ENCODE measurements at regions of chr1 and their contacts with region 1.

Region 1: DNA sequence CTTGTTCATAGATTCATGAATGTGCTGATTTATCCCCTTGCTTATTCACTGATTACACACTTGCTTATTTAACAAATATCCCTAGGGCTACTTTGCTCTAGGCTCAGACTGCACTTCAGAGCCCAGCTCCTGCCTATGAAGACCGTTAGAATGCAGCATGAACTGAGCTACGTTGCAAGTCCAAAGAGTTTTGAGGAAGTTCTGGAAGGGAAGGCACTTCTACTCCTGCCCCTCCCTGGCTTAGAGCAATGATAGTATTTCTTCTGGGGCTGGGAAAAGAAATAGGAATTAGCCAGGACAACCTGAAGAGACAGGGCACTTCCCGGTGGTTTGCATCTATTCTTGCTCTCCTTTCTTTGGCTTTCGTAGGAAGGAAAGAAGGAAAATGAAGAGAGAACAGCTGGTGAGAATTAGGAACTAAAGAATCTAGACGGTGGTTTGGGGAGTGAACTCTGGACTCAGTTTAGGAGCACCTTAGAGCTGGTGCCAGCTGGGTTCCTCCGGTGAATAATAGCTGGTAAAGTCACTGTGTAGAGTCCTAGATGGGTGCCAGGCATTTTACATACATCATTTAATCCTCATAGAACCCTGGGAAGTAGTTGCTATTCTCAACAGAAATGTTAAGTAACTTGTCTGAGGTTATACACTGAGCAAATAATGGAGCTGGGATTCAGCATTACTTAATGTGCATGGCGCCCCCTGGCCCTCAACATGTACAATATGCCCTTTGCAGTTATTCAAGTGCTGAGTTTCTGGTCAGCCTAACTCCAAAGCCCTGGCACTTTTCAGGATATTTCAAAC is 65.9 kb downstream of the NDUFS5 start:
- DNase-seq: peak in 7 of 9 experiments; percentile 13 to 74 (median 67)
- ATAC-seq: peak; percentile 75
- H3K4me3 ChIP-seq: no peak overlapping the region
- H3K4me3 Mint-ChIP-seq: no peak overlapping the region
- H3K27ac ChIP-seq: no peak overlapping the region
- H3K27ac Mint-ChIP-seq: no peak overlapping the region
- H3K4me1 ChIP-seq: no peaks in the 10 kb centered on the region
- H3K4me1 Mint-ChIP-seq: peaks cover 8% of the 10 kb centered on the region
- H3K27me3 ChIP-seq: no peaks in the 10 kb centered on the region
- H3K27me3 Mint-ChIP-seq: peaks cover 7% of the 10 kb centered on the region
- CTCF ChIP-seq: peak; percentile 69

Region 2: DNA sequence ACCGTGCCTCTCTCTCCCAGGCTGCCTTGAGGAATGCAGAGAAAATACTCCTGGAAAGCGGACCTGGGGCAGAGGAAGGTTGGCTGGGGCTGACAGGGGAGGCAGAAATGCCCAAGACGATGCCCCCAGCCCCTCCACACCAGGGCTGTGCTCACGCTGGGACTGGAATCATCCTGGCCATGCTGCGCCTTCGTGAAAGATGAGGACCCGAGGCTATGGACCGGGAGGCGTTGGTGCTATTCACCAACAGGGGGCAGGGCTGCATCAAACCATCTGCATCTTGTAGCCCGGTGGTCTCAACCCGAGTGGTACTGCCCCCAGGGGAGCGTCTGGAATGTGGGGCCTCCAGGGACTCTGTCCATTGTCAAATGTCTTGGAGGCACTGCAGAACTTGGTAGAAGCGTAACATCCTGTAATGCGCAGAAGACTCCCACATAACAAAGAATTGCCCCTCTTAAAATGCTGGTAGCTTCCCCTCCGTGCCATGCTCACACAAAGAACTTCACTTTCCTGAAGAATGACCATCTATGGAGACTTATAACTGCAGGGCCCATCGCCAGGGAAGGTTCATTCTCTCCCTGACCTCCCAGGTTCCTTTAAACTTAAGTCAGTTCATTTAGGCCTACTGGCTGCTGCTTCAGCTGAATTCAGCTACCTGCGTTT is 483.7 kb before region 1 on chr1:
- CTCF ChIA-PET with region 1: no interaction called
- POLR2A ChIA-PET with region 1: no interaction called
- intact Hi-C with region 1: loop called in 1 of 2 experiments (anchors 5 kb)
- DNase-seq: peak in 3 of 9 experiments; percentile 13 to 35 (median 19)
- ATAC-seq: no peak
- H3K4me3 ChIP-seq: no peak overlapping the region
- H3K4me3 Mint-ChIP-seq: no peak overlapping the region
- H3K27ac ChIP-seq: no peak overlapping the region
- H3K27ac Mint-ChIP-seq: no peak overlapping the region
- H3K4me1 ChIP-seq: no peaks in the 10 kb centered on the region
- H3K4me1 Mint-ChIP-seq: no peaks in the 10 kb centered on the region
- H3K27me3 ChIP-seq: no peaks in the 10 kb centered on the region
- H3K27me3 Mint-ChIP-seq: peaks cover 21% of the 10 kb centered on the region
- CTCF ChIP-seq: peak; percentile 29

Region 3: DNA sequence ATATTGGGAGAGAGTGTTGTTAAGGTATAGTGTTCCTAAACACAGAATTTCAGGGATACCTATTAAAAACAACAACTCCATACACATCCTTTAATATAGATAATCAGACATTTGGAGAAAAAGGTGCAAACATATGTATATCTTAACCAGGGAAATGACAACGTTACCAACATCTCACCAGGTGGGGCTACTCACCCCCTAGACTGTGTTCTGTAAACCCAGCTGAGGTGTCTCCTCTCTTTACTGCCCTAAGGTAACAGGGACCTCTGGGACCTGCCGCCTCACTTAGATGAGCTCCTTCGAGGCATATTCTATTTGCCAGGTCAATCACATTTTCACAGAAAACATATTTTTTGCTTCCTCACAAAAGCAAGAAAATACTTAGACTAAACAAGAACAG is 245.8 kb before region 1 on chr1:
- CTCF ChIA-PET with region 1: interaction called, 10 read pairs
- POLR2A ChIA-PET with region 1: no interaction called
- intact Hi-C with region 1: no loop called
- DNase-seq: peak in 1 of 9 experiments; percentile 21
- ATAC-seq: no peak
- H3K4me3 ChIP-seq: no peak overlapping the region
- H3K4me3 Mint-ChIP-seq: no peak overlapping the region
- H3K27ac ChIP-seq: no peak overlapping the region
- H3K27ac Mint-ChIP-seq: peak overlapping the region; percentile 11
- H3K4me1 ChIP-seq: no peaks in the 10 kb centered on the region
- H3K4me1 Mint-ChIP-seq: peaks cover 20% of the 10 kb centered on the region
- H3K27me3 ChIP-seq: no peaks in the 10 kb centered on the region
- H3K27me3 Mint-ChIP-seq: no peaks in the 10 kb centered on the region
- CTCF ChIP-seq: no peak

Region 4: DNA sequence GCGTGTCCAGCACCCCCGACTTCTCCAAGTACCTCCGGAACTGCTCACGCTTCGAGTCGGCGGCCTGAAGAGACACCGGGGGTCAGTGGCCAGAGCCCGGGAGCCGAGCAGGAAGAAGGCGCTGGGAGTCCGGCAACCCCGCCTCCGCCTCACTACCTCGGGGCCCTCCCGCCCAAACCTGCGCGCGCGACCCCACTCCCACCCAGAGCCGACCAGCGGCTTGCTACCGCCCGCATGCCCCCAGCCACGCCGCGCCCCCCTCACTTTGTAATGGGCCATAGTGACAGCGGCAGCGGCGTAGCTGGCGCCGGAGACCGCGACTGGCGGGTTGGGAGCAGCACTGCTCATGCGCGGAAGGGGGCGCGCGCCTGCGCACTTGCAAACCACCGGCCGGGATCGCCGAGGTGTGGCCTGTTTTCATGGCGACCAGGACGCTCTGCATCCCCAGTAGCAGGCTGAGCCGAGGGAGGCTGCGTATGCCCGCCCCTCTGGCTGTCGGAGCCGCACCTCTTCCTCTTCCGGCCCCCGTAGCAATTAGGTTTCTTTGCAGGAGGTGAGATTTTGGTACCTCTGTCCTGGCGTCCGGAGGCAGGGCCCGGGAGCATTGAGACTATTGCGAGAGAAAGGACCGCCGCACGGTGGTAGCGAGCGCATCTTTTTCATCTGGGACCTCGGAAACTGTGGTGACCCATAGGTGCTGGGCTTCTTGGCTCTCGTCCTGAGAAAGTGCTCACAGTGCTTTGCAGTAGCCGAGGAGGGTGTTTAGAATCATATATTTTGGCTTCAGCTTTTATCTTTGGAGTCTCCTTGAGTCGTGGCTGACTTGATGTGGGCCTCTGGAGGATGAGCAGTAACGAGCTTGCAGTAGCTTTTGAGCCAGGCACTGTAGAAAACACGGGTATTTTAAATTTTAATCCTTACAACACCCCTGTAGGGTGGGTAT is 218.7 kb before region 1 on chr1 and contains the start of gene MYCBP:
- CTCF ChIA-PET with region 1: no interaction called
- POLR2A ChIA-PET with region 1: no interaction called
- intact Hi-C with region 1: loop called in 1 of 2 experiments (anchors 1 kb)
- DNase-seq: peak; percentile 94 to 98 (median 97)
- ATAC-seq: peak; percentile 98
- H3K4me3 ChIP-seq: peak within 1 kb of the TSS; percentile 56 to 92
- H3K4me3 Mint-ChIP-seq: peak within 1 kb of the TSS; percentile 93
- H3K27ac ChIP-seq: peak within 1 kb of the TSS; percentile 67 to 71
- H3K27ac Mint-ChIP-seq: peak within 1 kb of the TSS; percentile 84
- H3K4me1 ChIP-seq: peaks cover 16% of the 10 kb centered on the region
- H3K4me1 Mint-ChIP-seq: peaks cover 31% of the 10 kb centered on the region
- H3K27me3 ChIP-seq: no peaks in the 10 kb centered on the region
- H3K27me3 Mint-ChIP-seq: no peaks in the 10 kb centered on the region
- CTCF ChIP-seq: no peak
- total RNA-seq, gene MYCBP: 2.0 to 3.2 TPM

Region 5: GRCh38 chr1:38891753-38892152 is 200.3 kb before region 1 on chr1:
- CTCF ChIA-PET with region 1: interaction called, 5 read pairs
- POLR2A ChIA-PET with region 1: interaction called, 3 read pairs
- intact Hi-C with region 1: loop called in 1 of 2 experiments (anchors 5 kb)
- DNase-seq: peak in 3 of 9 experiments; percentile 17 to 39 (median 35)
- ATAC-seq: peak; percentile 42
- H3K4me3 ChIP-seq: no peak overlapping the region
- H3K4me3 Mint-ChIP-seq: no peak overlapping the region
- H3K27ac ChIP-seq: no peak overlapping the region
- H3K27ac Mint-ChIP-seq: no peak overlapping the region
- H3K4me1 ChIP-seq: no peaks in the 10 kb centered on the region
- H3K4me1 Mint-ChIP-seq: no peaks in the 10 kb centered on the region
- H3K27me3 ChIP-seq: no peaks in the 10 kb centered on the region
- H3K27me3 Mint-ChIP-seq: no peaks in the 10 kb centered on the region
- CTCF ChIP-seq: no peak

Region 6: DNA sequence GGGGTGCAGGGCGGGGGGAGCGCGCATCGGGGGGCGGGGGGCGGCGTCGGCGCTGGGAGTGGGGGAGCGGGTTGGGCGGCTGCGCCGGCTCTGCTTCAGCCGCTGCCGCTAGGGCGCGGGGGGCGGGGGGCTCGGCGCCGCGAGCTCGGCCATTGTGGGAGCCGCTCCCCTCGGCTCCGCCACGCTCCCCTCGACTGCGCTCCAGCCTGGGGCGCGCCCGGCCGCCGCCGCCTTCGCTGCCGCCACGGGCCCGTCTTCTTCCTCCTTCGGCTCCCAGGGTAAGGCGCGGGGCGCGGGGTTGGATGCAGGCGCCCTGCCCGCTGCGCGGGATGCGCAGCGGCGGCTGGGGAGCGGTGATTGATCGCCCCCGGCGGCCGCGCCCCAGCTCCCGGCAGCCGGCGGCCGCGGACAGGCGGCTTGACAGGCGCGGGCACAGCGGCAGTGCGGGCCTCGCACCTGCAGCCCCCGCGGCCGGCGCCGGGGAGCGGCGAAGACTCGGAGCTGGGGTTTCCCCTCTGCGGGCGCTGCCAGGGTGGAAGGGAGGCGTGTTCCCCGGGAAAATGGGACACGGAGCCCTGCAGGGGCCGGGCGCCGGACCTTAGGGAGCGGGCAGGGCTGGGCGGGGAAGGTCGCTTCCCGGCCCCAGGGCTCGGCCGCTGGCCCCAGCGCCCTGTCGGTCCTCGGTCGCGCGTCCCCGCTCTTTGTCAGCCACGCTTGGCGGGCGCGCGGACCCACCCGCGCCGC is 10.6 kb before region 1 on chr1:
- CTCF ChIA-PET with region 1: interaction called, 21 read pairs
- POLR2A ChIA-PET with region 1: no interaction called
- intact Hi-C with region 1: no loop called
- DNase-seq: peak in 4 of 9 experiments; percentile 29 to 57 (median 40)
- ATAC-seq: peak; percentile 66
- H3K4me3 ChIP-seq: peak overlapping the region in 1 of 2 experiments; percentile 19
- H3K4me3 Mint-ChIP-seq: no peak overlapping the region
- H3K27ac ChIP-seq: no peak overlapping the region
- H3K27ac Mint-ChIP-seq: no peak overlapping the region
- H3K4me1 ChIP-seq: no peaks in the 10 kb centered on the region
- H3K4me1 Mint-ChIP-seq: peaks cover 7% of the 10 kb centered on the region
- H3K27me3 ChIP-seq: peaks cover 4 to 12% of the 10 kb centered on the region in 2 experiments
- H3K27me3 Mint-ChIP-seq: peaks cover 27% of the 10 kb centered on the region
- CTCF ChIP-seq: no peak